CD8-positive, alpha-beta T cell (primary cell): ENCODE measurements at regions of chr7 and their contacts with region 1.

Region 1: DNA sequence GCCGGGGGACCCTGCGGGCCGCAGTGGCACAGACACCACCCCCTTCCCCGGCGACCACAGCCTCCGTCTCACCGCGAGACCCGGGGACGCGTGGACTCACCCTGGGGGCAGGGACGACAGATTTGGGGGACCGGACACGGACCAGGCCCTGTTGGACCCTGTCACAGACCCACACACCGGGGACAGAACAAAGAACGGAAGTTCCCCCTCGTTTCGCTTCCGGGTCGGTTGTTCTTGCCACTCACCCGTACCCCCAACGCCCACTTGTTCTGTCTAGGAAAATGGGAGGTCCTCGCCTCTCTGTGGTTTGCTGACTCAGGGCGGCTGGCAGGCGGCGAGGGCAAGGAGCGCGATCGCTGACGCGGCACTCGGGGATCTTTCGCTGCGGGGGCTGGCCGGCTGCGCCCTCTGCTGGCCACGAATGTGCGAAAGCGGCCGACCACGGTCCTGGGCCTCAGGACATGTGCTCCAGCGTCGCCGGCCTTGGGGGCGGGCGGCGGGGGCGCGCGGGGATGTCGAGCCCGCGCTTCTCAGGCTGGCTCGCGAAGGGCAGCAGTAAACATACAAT is at the start of gene ZNF3:
- DNase-seq: peak; percentile 94 to 99 (median 97)
- ATAC-seq: peak; percentile 88
- H3K4me3 ChIP-seq: peak within 1 kb of the TSS; percentile 64 to 65
- H3K4me3 Mint-ChIP-seq: peak within 1 kb of the TSS; percentile 94
- H3K27ac ChIP-seq: peak within 1 kb of the TSS; percentile 58 to 78
- H3K27ac Mint-ChIP-seq: peak within 1 kb of the TSS; percentile 96
- H3K4me1 ChIP-seq: peaks cover 17% of the 10 kb centered on the region
- H3K4me1 Mint-ChIP-seq: peaks cover 38% of the 10 kb centered on the region
- H3K27me3 ChIP-seq: no peaks in the 10 kb centered on the region
- H3K27me3 Mint-ChIP-seq: no peaks in the 10 kb centered on the region
- CTCF ChIP-seq: peak; percentile 98
- total RNA-seq, gene ZNF3: 34.9 to 35.6 TPM

Region 2: GRCh38 chr7:99558306-99559174 is 523.1 kb before region 1 on chr7 and contains the start of gene ZNF655:
- CTCF ChIA-PET with region 1: no interaction called
- POLR2A ChIA-PET with region 1: no interaction called
- intact Hi-C with region 1: loop called in 1 of 2 experiments (anchors 2 kb)
- DNase-seq: peak; percentile 83 to 97 (median 93)
- ATAC-seq: peak; percentile 81
- H3K4me3 ChIP-seq: peak within 1 kb of the TSS; percentile 72 to 97
- H3K4me3 Mint-ChIP-seq: peak within 1 kb of the TSS; percentile 98
- H3K27ac ChIP-seq: peak within 1 kb of the TSS; percentile 98 to 99
- H3K27ac Mint-ChIP-seq: peak within 1 kb of the TSS; percentile 98
- H3K4me1 ChIP-seq: peaks cover 40% of the 10 kb centered on the region
- H3K4me1 Mint-ChIP-seq: peaks cover 57% of the 10 kb centered on the region
- H3K27me3 ChIP-seq: no peaks in the 10 kb centered on the region
- H3K27me3 Mint-ChIP-seq: no peaks in the 10 kb centered on the region
- CTCF ChIP-seq: no peak
- total RNA-seq, gene ZNF655: 177 to 186 TPM

Region 3: GRCh38 chr7:99928994-99929729 is 152.5 kb before region 1 on chr7 and contains the start of gene GJC3:
- CTCF ChIA-PET with region 1: no interaction called
- POLR2A ChIA-PET with region 1: no interaction called
- intact Hi-C with region 1: no loop called
- DNase-seq: peak in 7 of 9 experiments; percentile 35 to 74 (median 44)
- ATAC-seq: peak; percentile 87
- H3K4me3 ChIP-seq: peak within 1 kb of the TSS; percentile 18 to 41
- H3K4me3 Mint-ChIP-seq: peak within 1 kb of the TSS; percentile 75
- H3K27ac ChIP-seq: no peak within 1 kb of the TSS
- H3K27ac Mint-ChIP-seq: peak within 1 kb of the TSS; percentile 7
- H3K4me1 ChIP-seq: peaks cover 20% of the 10 kb centered on the region
- H3K4me1 Mint-ChIP-seq: peaks cover 23% of the 10 kb centered on the region
- H3K27me3 ChIP-seq: no peaks in the 10 kb centered on the region
- H3K27me3 Mint-ChIP-seq: peaks cover 19% of the 10 kb centered on the region
- CTCF ChIP-seq: no peak
- total RNA-seq, gene GJC3: not detected

Region 4: GRCh38 chr7:99997545-99998137 is 84.0 kb before region 1 on chr7:
- CTCF ChIA-PET with region 1: interaction called, 5 read pairs
- POLR2A ChIA-PET with region 1: no interaction called
- intact Hi-C with region 1: loop called (anchors 1 kb)
- DNase-seq: peak; percentile 51 to 91 (median 74)
- ATAC-seq: peak; percentile 88
- H3K4me3 ChIP-seq: peak overlapping the region; percentile 48 to 54
- H3K4me3 Mint-ChIP-seq: peak overlapping the region; percentile 73
- H3K27ac ChIP-seq: peak overlapping the region; percentile 64 to 82
- H3K27ac Mint-ChIP-seq: peak overlapping the region; percentile 92
- H3K4me1 ChIP-seq: peaks cover 12% of the 10 kb centered on the region
- H3K4me1 Mint-ChIP-seq: peaks cover 11% of the 10 kb centered on the region
- H3K27me3 ChIP-seq: no peaks in the 10 kb centered on the region
- H3K27me3 Mint-ChIP-seq: no peaks in the 10 kb centered on the region
- CTCF ChIP-seq: no peak

Region 5: DNA sequence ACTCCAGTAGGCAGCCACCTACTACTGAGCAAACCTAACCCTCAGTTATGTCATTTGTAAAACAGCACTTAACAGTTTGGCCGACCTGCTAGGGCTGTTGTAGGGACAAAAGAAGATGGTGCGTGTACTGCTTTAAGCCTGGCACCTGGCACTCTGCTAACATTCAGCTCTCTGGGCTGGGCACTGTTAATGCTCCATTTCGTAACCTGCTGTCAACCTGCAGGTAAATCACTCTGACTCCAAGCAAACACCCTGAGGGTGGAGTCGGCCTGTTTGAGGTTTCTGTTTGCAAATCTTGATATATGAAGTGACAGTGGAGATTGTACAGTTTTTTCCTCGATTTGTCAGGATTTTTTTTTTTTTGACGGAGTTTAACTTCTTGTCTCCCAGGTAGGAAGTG is 59.0 kb before region 1 on chr7:
- CTCF ChIA-PET with region 1: no interaction called
- POLR2A ChIA-PET with region 1: no interaction called
- intact Hi-C with region 1: no loop called
- DNase-seq: no peak
- ATAC-seq: no peak
- H3K4me3 ChIP-seq: no peak overlapping the region
- H3K4me3 Mint-ChIP-seq: no peak overlapping the region
- H3K27ac ChIP-seq: no peak overlapping the region
- H3K27ac Mint-ChIP-seq: peak overlapping the region; percentile 55
- H3K4me1 ChIP-seq: peaks cover 4% of the 10 kb centered on the region
- H3K4me1 Mint-ChIP-seq: peaks cover 34% of the 10 kb centered on the region
- H3K27me3 ChIP-seq: no peaks in the 10 kb centered on the region
- H3K27me3 Mint-ChIP-seq: no peaks in the 10 kb centered on the region
- CTCF ChIP-seq: no peak

Region 6: DNA sequence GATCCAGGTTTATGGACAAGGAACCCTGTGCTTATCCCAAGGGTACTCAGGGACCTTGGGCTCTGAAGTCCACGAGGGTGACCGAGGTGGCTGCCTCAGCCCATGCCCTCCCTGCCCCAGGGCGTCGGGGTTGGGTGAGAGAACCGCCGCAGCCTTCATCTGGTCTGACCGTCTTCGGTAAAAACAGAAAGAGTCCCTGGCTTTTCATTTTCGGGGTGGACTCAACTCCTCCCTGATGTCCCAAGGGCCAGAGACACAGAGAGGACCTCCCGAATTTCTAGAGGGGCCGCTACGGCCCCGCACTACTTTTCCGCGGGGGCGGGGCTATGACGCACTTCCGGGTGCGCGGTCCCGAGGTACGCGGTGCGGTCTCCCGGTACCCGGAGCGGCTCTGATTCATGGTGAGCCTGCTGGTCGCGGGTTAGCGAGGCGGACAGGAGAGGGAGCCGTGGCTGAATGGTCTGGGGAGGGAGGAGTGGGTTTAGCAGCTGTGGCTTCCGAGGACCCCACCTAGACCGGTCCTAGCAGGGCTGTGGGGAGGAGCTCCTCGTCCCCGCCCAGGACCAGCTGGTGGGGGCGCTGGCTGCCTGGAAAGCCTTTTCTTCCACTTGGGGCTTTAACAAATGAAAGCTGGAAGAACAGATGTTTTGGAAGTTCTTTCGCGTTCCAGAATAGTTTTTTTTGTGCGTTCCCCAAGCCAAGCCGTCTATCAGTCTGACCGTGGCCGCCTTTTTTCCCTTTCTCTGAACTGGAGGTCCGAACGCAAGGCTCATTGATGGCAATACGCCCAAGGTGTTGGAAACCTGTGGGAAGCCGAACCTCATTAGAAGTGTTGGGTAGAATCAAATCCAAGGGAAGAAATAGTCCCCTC is 31.9 kb before region 1 on chr7 and contains the start of gene ZSCAN21:
- CTCF ChIA-PET with region 1: no interaction called
- POLR2A ChIA-PET with region 1: no interaction called
- intact Hi-C with region 1: loop called (anchors 1 kb)
- DNase-seq: peak; percentile 51 to 91 (median 84)
- ATAC-seq: peak; percentile 89
- H3K4me3 ChIP-seq: peak within 1 kb of the TSS; percentile 69 to 99
- H3K4me3 Mint-ChIP-seq: peak within 1 kb of the TSS; percentile 93
- H3K27ac ChIP-seq: peak within 1 kb of the TSS; percentile 87 to 96
- H3K27ac Mint-ChIP-seq: peak within 1 kb of the TSS; percentile 98
- H3K4me1 ChIP-seq: peaks cover 12% of the 10 kb centered on the region
- H3K4me1 Mint-ChIP-seq: peaks cover 25% of the 10 kb centered on the region
- H3K27me3 ChIP-seq: no peaks in the 10 kb centered on the region
- H3K27me3 Mint-ChIP-seq: no peaks in the 10 kb centered on the region
- CTCF ChIP-seq: no peak
- total RNA-seq, gene ZSCAN21: 4.8 to 5.7 TPM

Region 7: GRCh38 chr7:100119062-100119700 is 37.6 kb after region 1 on chr7 and contains the starts of genes CNPY4 and TAF6:
- CTCF ChIA-PET with region 1: interaction called, 3 read pairs
- POLR2A ChIA-PET with region 1: interaction called, 7 read pairs
- intact Hi-C with region 1: loop called (anchors 1 kb)
- DNase-seq: peak; percentile 86 to 97 (median 96)
- ATAC-seq: peak; percentile 69
- H3K4me3 ChIP-seq: peak within 1 kb of the TSS; percentile 80 to 93
- H3K4me3 Mint-ChIP-seq: peak within 1 kb of the TSS; percentile 99
- H3K27ac ChIP-seq: peak within 1 kb of the TSS; percentile 88 to 93
- H3K27ac Mint-ChIP-seq: peak within 1 kb of the TSS; percentile 93
- H3K4me1 ChIP-seq: peaks cover 17% of the 10 kb centered on the region
- H3K4me1 Mint-ChIP-seq: peaks cover 28% of the 10 kb centered on the region
- H3K27me3 ChIP-seq: no peaks in the 10 kb centered on the region
- H3K27me3 Mint-ChIP-seq: no peaks in the 10 kb centered on the region
- CTCF ChIP-seq: no peak
- total RNA-seq, gene CNPY4: 21.4 to 24.4 TPM
- total RNA-seq, gene TAF6: 24.9 to 31.6 TPM

Region 8: DNA sequence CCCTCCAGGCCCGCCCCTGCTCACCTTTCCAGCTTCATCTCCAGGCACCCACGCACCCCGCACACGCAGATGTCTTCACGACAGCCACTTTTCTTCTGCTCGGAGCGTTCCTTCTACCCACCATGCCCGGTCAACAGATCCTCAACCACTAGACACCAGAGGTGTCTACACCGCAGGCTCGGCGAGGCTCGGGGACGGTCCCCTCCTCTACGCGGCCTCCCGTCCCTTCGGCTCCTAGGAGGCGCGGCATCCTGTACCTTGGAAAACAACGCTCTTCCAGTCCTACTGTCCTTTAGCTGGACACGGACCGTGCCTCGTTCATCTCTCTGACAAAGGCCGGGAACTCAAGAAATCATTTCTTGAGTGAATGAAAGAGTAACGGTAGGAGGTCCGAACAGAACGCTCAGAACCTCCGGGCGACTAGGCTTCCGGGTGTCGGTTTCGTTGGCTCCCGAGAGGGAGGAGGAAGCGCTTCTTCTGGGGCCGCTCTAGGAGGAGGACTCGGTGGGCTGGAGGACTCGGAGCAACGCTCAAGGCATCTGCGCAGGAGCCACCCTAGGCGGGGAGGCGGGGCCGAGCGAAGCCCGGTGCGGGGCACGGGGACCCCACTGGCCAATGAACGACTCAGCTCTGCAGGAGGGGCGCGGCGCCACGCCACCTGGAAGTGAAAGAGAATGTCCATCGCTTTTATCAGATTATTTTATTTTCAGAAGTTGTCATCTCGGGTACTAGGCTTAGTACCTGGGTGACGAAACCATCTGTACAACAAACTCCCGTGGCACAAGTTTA is 1170.4 kb after region 1 on chr7:
- CTCF ChIA-PET with region 1: no interaction called
- POLR2A ChIA-PET with region 1: no interaction called
- intact Hi-C with region 1: loop called in 1 of 2 experiments (anchors 10 kb)
- DNase-seq: peak; percentile 97 to 100 (median 99)
- ATAC-seq: peak; percentile 98
- H3K4me3 ChIP-seq: peak overlapping the region; percentile 91 to 97
- H3K4me3 Mint-ChIP-seq: peak overlapping the region; percentile 96
- H3K27ac ChIP-seq: peak overlapping the region; percentile 80 to 86
- H3K27ac Mint-ChIP-seq: peak overlapping the region; percentile 96
- H3K4me1 ChIP-seq: peaks cover 17% of the 10 kb centered on the region
- H3K4me1 Mint-ChIP-seq: peaks cover 32% of the 10 kb centered on the region
- H3K27me3 ChIP-seq: no peaks in the 10 kb centered on the region
- H3K27me3 Mint-ChIP-seq: peaks cover 3% of the 10 kb centered on the region
- CTCF ChIP-seq: no peak